PC-9 (cell line): ENCODE measurements at regions of chr11 and their contacts with region 1.

Region 1: DNA sequence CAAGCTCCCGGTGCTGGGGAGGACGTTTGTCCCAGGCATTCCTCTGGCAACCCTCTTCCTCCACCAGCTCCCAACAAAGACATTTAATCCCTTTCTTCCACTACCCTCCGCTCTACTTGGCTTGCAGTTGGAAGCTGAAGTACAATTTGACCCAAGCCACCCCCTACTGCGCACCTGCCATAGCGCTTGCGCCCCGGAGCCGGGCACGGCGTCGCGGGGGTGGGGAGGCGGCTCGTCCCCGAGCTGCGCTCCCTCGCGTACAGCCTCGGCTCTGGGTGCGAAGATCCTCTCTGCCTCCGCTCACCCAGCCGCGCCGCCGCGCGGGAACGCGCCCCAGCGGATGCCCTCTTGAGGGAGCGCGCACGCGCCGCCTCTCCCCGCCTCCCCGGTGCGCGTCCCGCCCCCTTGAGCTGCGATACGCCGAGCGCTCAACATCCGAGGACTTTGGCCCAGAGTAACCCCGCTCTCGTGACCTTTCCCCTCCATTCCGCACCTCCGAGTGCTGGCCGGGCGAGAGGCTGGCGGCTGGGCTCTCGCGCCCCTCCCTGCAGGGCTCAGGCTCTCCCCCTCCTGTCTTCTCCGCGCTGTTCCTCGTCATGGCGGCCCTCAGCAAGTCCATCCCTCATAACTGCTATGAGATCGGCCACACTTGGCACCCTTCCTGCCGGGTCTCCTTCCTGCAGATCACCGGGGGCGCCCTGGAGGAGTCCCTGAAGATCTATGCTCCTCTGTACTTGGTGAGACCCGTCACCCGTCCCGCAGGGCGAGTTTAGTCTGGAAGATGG is at the start of gene TMEM135:
- DNase-seq: peak; percentile 95 to 96
- H3K4me3 ChIP-seq: peak within 1 kb of the TSS; percentile 98
- H3K27ac ChIP-seq: peak within 1 kb of the TSS; percentile 81
- H3K4me1 ChIP-seq: peaks cover 48% of the 10 kb centered on the region
- H3K27me3 ChIP-seq: no peaks in the 10 kb centered on the region
- CTCF ChIP-seq: no peak
- total RNA-seq, gene TMEM135: 15.0 and 42.0 TPM in 2 replicates

Region 2: DNA sequence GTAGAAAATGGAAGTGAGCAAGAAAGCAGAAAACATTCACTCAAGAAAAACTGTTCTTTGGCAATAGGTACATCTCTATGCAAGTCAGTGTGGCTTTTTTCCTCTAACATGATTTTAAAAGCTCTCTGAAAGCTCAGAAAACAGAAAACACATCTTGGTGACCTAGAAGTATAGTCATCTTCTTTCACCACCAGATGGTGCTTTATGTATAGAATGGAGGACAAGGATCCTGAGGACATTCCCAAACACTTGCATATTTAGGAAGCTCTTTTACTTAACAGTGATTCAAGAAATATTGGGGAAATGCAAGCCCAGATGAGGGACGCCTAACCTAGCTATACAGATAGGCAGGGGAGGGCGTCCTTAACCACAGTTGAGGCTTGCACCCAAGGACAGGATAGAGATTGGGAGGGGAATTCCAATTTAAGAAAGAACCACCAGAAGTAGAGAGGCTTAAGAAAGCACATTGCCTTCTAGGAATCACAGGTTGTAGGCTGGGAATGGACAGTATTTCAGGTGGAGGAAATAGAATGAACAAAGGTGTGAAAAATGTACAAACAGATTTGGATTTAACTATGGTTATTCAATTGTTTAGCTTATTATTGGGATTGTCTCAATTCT is 676.8 kb before region 1 on chr11:
- CTCF ChIA-PET with region 1: no interaction called
- POLR2A ChIA-PET with region 1: no interaction called
- intact Hi-C with region 1: no loop called
- DNase-seq: peak in 1 of 2 experiments; percentile 65
- H3K4me3 ChIP-seq: no peak overlapping the region
- H3K27ac ChIP-seq: no peak overlapping the region
- H3K4me1 ChIP-seq: no peaks in the 10 kb centered on the region
- H3K27me3 ChIP-seq: no peaks in the 10 kb centered on the region
- CTCF ChIP-seq: peak; percentile 77

Region 3: GRCh38 chr11:86955361-86956120 is 82.1 kb before region 1 on chr11 and contains the start of gene FZD4:
- CTCF ChIA-PET with region 1: no interaction called
- POLR2A ChIA-PET with region 1: interaction called, 3 read pairs
- intact Hi-C with region 1: loop called (anchors 2 kb)
- DNase-seq: peak; percentile 77 to 91
- H3K4me3 ChIP-seq: peak within 1 kb of the TSS; percentile 85
- H3K27ac ChIP-seq: peak within 1 kb of the TSS; percentile 56
- H3K4me1 ChIP-seq: peaks cover 16% of the 10 kb centered on the region
- H3K27me3 ChIP-seq: no peaks in the 10 kb centered on the region
- CTCF ChIP-seq: peak; percentile 54; the same call in 1 of the 2 replicates
- total RNA-seq, gene FZD4: 2.6 TPM in 2 replicates

Region 4: GRCh38 chr11:86990515-86990914 is 47.1 kb before region 1 on chr11:
- CTCF ChIA-PET with region 1: no interaction called
- POLR2A ChIA-PET with region 1: interaction called, 11 read pairs
- intact Hi-C with region 1: loop called (anchors 2 kb)
- DNase-seq: peak in 1 of 2 experiments; percentile 46
- H3K4me3 ChIP-seq: no peak overlapping the region
- H3K27ac ChIP-seq: no peak overlapping the region
- H3K4me1 ChIP-seq: peaks cover 16% of the 10 kb centered on the region
- H3K27me3 ChIP-seq: no peaks in the 10 kb centered on the region
- CTCF ChIP-seq: no peak

Region 5: GRCh38 chr11:86999859-87000753 is 37.5 kb before region 1 on chr11:
- CTCF ChIA-PET with region 1: no interaction called
- POLR2A ChIA-PET with region 1: interaction called, 6 read pairs
- intact Hi-C with region 1: loop called (anchors 1 kb)
- DNase-seq: peak; percentile 78 to 98
- H3K4me3 ChIP-seq: no peak overlapping the region; the same call in 1 of the 2 replicates
- H3K27ac ChIP-seq: peak overlapping the region; percentile 53
- H3K4me1 ChIP-seq: peaks cover 22% of the 10 kb centered on the region
- H3K27me3 ChIP-seq: no peaks in the 10 kb centered on the region
- CTCF ChIP-seq: no peak